ENCODE measurements at regions of chr1 and their contacts with region 1.

Region 1: DNA sequence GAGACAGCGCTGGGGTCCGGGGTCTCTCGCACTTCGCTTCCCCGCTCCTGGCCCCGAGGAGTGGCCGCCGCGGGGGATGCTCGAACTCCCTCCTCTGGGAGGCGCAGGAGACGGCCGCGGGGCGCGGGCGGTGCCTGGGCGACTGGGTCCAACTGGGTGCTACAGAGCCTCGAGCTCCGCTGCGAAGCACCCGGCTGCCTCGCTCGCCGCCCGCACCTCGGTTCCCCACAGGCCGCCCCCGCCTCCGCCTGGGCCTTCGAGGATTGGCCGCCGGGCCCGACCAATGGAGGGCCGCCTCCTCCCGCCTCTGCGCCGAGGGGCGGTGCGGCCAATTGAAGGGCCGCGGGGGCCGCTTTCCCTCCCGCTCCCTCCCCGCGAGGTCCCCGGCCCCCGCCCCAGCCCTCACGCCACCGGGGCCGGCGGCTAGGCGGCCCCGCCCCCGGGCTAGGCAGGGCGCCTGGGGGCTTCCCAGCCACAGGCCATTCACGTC is at the start of gene CNN3:
- DNase-seq: peak; percentile 93 to 94
- ATAC-seq: peak; percentile 84
- total RNA-seq, gene CNN3: 79.1 to 114 TPM

Region 2: DNA sequence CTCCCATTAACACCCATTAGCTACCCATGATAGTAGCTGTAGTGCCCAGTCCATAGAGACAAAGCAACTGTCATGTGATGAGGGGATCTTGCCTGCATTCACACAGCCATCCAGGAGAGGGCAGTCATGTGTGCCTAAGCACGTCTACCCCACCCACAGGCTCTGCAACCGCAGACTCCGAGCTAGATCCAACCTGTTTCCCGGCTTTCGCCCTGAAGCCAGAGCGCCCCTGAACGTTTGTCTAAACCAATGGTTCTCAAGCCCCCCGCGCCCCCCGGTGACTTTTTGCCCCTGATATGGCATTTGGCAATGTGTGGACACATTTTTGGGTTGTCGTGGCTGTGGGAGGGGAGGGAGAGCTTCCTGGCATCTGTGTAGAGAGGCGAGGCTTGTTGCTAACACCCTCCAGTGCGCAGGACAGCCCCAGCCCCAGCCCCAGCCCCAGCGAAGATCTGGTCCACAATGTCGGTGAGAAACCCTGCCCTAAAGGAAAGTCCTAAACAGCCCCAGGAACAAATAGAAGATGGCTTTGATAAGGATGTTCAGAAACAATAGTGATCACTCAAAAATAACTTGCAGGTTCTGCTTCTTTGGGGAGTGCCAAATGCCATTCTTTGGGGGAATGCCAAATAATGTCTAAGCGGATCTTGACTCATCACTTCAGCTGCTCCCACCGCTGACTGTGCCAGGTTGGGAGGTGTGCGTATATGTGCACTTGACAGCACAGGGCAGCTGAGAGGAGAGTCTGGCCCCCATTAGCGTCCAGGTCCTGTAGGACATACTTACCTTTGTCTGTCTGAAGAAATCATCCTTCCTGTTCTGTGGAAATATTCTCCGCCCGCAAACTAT is 72.3 kb before region 1 on chr1:
- intact Hi-C with region 1: loop called in 1 of 2 experiments (anchors 5 kb)
- DNase-seq: peak; percentile 88 to 89
- ATAC-seq: peak; percentile 91

Region 3: GRCh38 chr1:95043141-95043980 is 116.4 kb after region 1 on chr1:
- intact Hi-C with region 1: loop called in 1 of 2 experiments (anchors 5 kb)
- DNase-seq: peak; percentile 75 to 83
- ATAC-seq: peak; percentile 77

Measured in left colon (tissue), 2 donors.